Tibial artery (tissue), 4 donors: ENCODE measurements at regions of chr20 and their contacts with region 1.

Region 1: GRCh38 chr20:5786930-5787795 is 37.0 kb downstream of the SHLD1 start:
- DNase-seq: peak in 1 of 2 donors; percentile 28
- H3K4me3 ChIP-seq: no peak overlapping the region
- H3K27ac ChIP-seq: no peak overlapping the region
- H3K4me1 ChIP-seq: peaks cover 0 to 16% (median 12%) of the 10 kb centered on the region in 4 donors
- H3K27me3 ChIP-seq: no peaks in the 10 kb centered on the region
- CTCF ChIP-seq: no peak

Region 2: DNA sequence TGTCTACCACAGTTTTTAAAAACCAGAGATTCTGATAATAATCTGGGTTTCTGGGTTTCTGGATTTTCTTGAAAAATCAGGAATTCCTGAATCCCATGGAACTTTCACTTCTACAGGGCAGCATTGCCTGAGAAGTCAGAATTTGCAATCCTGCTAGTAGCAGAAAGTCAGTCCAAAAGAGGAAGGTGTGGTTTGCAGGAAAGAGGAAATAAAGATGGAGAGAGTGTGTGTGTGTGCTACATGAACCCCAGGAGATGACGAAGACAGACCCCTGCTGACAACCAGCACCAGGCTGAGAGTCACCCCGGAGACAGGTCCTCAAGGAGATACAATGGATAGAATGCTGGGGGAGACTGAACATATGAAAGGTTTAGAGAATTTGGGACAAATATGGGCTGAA is 1020.5 kb before region 1 on chr20:
- intact Hi-C with region 1: no loop called
- DNase-seq: peak in 1 of 2 donors; percentile 37
- H3K4me3 ChIP-seq: no peak overlapping the region
- H3K27ac ChIP-seq: no peak overlapping the region
- H3K4me1 ChIP-seq: no peaks in the 10 kb centered on the region
- H3K27me3 ChIP-seq: no peaks in the 10 kb centered on the region
- CTCF ChIP-seq: no peak

Region 3: GRCh38 chr20:5529331-5530148 is 257.6 kb before region 1 on chr20:
- intact Hi-C with region 1: loop called (anchors 2 kb)
- DNase-seq: peak; percentile 84 to 87
- H3K4me3 ChIP-seq: no peak overlapping the region
- H3K27ac ChIP-seq: no peak overlapping the region
- H3K4me1 ChIP-seq: peaks cover 0 to 13% (median 5%) of the 10 kb centered on the region in 4 donors
- H3K27me3 ChIP-seq: no peaks in the 10 kb centered on the region
- CTCF ChIP-seq: peak; percentile 45 to 60

Region 4: GRCh38 chr20:5751856-5752255 is 35.3 kb before region 1 on chr20:
- intact Hi-C with region 1: loop called (anchors 1 kb)
- DNase-seq: no peak
- H3K4me3 ChIP-seq: no peak overlapping the region
- H3K27ac ChIP-seq: no peak overlapping the region
- H3K4me1 ChIP-seq: peaks cover 0 to 7% (median 3%) of the 10 kb centered on the region in 4 donors
- H3K27me3 ChIP-seq: no peaks in the 10 kb centered on the region
- CTCF ChIP-seq: no peak